ENCODE measurements at regions of chr1 and their contacts with region 1.

Region 1: DNA sequence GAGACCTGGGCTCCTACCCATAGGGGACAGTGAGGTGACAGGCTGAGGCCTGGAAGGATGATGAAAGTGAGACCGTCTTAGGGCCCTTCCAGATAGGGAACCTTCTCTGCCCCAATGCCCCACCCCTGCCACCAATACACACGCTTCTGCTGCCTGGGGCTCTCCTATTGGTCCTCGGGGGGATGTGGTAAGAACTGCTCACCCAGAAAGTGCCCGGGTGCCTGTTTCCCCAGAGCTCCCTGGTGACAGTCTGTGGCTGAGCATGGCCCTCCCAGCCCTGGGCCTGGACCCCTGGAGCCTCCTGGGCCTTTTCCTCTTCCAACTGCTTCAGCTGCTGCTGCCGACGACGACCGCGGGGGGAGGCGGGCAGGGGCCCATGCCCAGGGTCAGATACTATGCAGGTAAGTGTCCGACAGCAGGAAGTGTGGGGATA is 948 bp downstream of the SEMA4A start:
- DNase-seq: no peak
- H3K4me3 ChIP-seq: no peak overlapping the region
- H3K27ac ChIP-seq: no peak overlapping the region
- H3K4me1 ChIP-seq: no peaks in the 10 kb centered on the region
- H3K27me3 ChIP-seq: peaks cover 39% of the 10 kb centered on the region
- CTCF ChIP-seq: no peak

Region 2: GRCh38 chr1:156200044-156200443 is 45.7 kb after region 1 on chr1:
- intact Hi-C with region 1: loop called (anchors 10 kb)
- DNase-seq: no peak
- H3K4me3 ChIP-seq: no peak overlapping the region
- H3K27ac ChIP-seq: no peak overlapping the region
- H3K4me1 ChIP-seq: peaks cover 85% of the 10 kb centered on the region
- H3K27me3 ChIP-seq: no peaks in the 10 kb centered on the region
- CTCF ChIP-seq: no peak